ENCODE measurements at regions of chr13 and their contacts with region 1.

Region 1: DNA sequence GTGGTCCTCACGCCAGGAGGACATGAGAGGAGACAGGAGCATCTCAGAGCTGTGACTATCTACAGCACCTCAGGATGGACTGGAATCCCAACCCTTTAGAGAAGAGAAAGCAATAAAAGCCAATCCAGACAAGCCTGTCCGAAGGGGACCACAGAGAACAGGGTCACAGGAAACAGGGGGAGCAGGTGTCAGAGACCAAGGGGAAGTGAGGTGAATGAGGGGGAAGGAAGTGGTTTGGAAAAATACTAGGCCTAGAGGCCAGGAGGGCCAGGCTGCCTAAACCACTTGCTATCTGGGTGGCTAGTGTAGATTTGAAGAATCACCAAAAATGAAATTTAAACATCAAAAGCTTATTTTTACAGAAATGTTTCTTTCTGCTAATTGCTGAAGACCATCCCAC is 16.2 kb downstream of the TMTC4 start:
- DNase-seq: no peak
- H3K4me3 ChIP-seq: no peak overlapping the region
- H3K27ac ChIP-seq: no peak overlapping the region
- H3K4me1 ChIP-seq: peaks cover 0 to 5% (median 2%) of the 10 kb centered on the region in 4 experiments; a peak in 4 of 7 replicates
- H3K27me3 ChIP-seq: no peaks in the 10 kb centered on the region
- CTCF ChIP-seq: no peak
- EP300 ChIP-seq: no peak
- POLR2A ChIP-seq: no peak
- RAD21 ChIP-seq: no peak

Region 2: DNA sequence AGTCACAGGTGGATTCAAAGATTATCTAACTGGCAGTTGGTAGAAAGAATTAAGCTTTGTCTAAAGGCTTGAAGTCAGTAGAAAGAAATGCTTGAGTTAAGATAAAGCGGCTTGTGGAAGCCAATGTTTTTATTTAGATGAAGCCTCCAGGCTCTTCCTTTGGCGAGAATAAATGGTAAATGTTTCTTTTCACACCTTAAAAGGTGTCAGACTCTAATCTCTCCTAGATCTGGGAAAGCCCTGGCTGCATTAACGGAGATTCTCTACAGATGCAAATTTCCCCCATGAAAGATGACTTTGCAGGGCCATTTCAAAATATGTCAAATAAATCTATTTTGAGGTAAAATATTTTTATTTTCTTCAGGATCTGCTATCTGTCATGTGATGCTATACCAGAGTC is 607.3 kb before region 1 on chr13:
- CTCF ChIA-PET with region 1: no interaction called
- POLR2A ChIA-PET with region 1: no interaction called
- DNase-seq: no peak
- H3K4me3 ChIP-seq: no peak overlapping the region
- H3K27ac ChIP-seq: no peak overlapping the region
- H3K4me1 ChIP-seq: peaks cover 0 to 3% (median 0%) of the 10 kb centered on the region in 4 experiments; a peak in 1 of 7 replicates
- H3K27me3 ChIP-seq: no peaks in the 10 kb centered on the region
- CTCF ChIP-seq: no peak
- EP300 ChIP-seq: no peak
- POLR2A ChIP-seq: no peak
- RAD21 ChIP-seq: no peak

Region 3: GRCh38 chr13:100520936-100521850 is 137.2 kb before region 1 on chr13:
- CTCF ChIA-PET with region 1: no interaction called
- POLR2A ChIA-PET with region 1: no interaction called
- DNase-seq: no peak
- H3K4me3 ChIP-seq: no peak overlapping the region
- H3K27ac ChIP-seq: no peak overlapping the region
- H3K4me1 ChIP-seq: peaks cover 4 to 20% (median 15%) of the 10 kb centered on the region in 4 experiments
- H3K27me3 ChIP-seq: no peaks in the 10 kb centered on the region
- CTCF ChIP-seq: no peak
- EP300 ChIP-seq: no peak
- POLR2A ChIP-seq: peak in 1 of 2 experiments; percentile 42; a peak in 1 of 3 replicates
- RAD21 ChIP-seq: no peak

Region 4: GRCh38 chr13:100646030-100646673 is 12.2 kb before region 1 on chr13:
- CTCF ChIA-PET with region 1: interaction called, 19 read pairs
- POLR2A ChIA-PET with region 1: interaction called, 3 read pairs
- DNase-seq: no peak
- H3K4me3 ChIP-seq: no peak overlapping the region
- H3K27ac ChIP-seq: no peak overlapping the region
- H3K4me1 ChIP-seq: no peaks in the 10 kb centered on the region
- H3K27me3 ChIP-seq: no peaks in the 10 kb centered on the region; a peak in 1 of 7 replicates
- CTCF ChIP-seq: peak in 2 of 3 experiments; percentile 53 to 63; a peak in 2 of 4 replicates
- EP300 ChIP-seq: no peak
- POLR2A ChIP-seq: no peak
- RAD21 ChIP-seq: peak; percentile 47 to 57